ENCODE measurements at regions of chr9 and their contacts with region 1.

Region 1: DNA sequence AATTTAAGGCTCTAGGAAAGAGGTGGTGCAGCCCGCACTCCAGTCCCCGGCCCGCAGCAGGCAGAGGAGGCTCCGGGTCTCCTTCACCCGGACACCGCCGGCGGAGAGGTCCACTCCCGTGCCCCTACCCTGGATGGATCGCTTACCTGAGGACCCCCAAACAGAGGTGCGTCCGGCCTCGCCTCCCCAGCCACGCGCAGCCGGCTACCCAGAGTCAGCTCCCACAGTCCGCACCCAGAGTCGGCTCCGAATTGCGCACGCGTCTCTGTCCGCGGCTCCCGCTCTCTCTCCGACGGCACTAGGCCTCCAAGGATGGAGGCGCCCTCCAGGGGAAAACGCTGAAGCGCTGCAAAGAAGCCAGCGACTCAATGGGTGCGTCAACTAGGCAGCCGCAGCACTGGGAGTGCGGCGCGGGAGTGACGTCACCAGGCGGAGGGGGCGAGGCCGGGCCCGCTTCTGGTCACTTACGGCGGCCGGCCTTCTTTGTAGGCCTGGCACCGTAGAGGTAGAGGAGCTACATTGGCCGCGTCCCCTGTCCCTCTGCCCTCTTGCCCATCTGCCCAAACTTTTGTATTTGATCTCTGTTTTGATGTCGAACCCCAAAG is at the start of gene ELP1:
- DNase-seq: peak; percentile 88 to 93 (median 91)
- ATAC-seq: peak; percentile 91
- H3K4me3 ChIP-seq: peak within 1 kb of the TSS; percentile 90
- H3K4me3 Mint-ChIP-seq: peak within 1 kb of the TSS; percentile 88 to 100 (median 99)
- H3K27ac ChIP-seq: peak within 1 kb of the TSS; percentile 92
- H3K27ac Mint-ChIP-seq: peak within 1 kb of the TSS; percentile 96 to 99 (median 98)
- H3K4me1 ChIP-seq: peaks cover 15 to 18% of the 10 kb centered on the region in 2 donors
- H3K4me1 Mint-ChIP-seq: peaks cover 23 to 54% (median 38%) of the 10 kb centered on the region in 7 donors
- H3K27me3 ChIP-seq: no peaks in the 10 kb centered on the region
- H3K27me3 Mint-ChIP-seq: no peaks in the 10 kb centered on the region
- total RNA-seq, gene ELP1: 21.7 to 41.4 (median 26.5) TPM

Region 2: DNA sequence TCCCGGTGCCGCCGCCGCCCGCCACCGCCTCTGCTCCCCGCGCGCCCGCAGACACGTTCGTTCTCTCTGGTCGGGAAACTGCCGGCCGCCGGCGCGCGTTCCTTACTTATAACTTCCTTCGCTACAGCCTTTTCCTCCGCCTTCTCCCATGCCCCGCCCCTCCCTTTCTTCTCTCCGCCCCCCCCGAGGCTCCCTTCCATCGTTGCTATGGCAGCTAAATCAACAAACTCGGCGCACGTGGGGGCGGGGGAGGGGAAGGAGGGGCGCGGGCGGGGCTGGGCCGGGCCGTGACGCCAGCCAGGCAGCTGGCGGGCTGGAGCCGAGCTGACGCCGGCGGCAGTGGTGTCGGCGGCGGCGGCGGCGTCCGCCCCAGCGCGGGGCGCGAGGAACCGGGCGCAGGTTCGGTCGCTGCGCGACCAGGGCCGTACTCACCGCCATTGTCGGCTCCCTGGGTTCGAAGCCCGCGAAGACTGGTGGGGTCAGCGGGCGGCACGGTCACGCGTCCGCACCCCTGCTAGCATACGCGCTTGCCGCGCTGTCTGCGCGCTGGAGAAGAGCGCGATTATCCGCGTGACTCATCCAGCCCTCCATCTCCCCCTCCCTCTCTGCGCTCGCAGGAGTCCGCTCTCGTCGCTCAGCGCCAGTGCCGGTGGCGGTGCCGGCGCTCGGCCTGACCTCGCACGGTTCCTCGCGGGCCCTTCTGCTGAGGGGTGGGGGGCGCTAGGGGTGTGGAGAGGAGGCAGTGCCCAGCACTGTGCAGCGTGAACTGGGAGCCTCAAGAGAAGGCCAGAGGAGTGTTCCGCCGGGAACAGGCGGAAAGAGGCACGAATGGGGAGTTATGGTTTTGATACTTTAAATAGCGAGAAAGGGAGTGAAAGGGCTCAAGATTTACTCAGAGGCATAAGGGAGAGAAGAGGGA is 1443.9 kb before region 1 on chr9 and contains the start of gene KLF4:
- CTCF ChIA-PET with region 1: no interaction called
- POLR2A ChIA-PET with region 1: no interaction called
- intact Hi-C with region 1: loop called in 1 of 2 experiments (anchors 5 kb)
- DNase-seq: peak in 7 of 9 donors; percentile 7 to 72 (median 23)
- ATAC-seq: peak; percentile 77
- H3K4me3 ChIP-seq: no peak within 1 kb of the TSS
- H3K4me3 Mint-ChIP-seq: peak within 1 kb of the TSS; percentile 59 to 85 (median 73)
- H3K27ac ChIP-seq: no peak within 1 kb of the TSS
- H3K27ac Mint-ChIP-seq: peak within 1 kb of the TSS in 1 of 9 donors; percentile 80
- H3K4me1 ChIP-seq: peaks cover 0 to 5% of the 10 kb centered on the region in 2 donors
- H3K4me1 Mint-ChIP-seq: peaks cover 5 to 28% (median 15%) of the 10 kb centered on the region in 7 donors
- H3K27me3 ChIP-seq: peaks cover 0 to 3% of the 10 kb centered on the region in 2 donors
- H3K27me3 Mint-ChIP-seq: peaks cover 56 to 71% (median 60%) of the 10 kb centered on the region in 5 donors
- total RNA-seq, gene KLF4: 0.29 to 266 (median 1.0) TPM

Region 3: GRCh38 chr9:108776920-108777645 is 156.7 kb before region 1 on chr9:
- CTCF ChIA-PET with region 1: no interaction called
- POLR2A ChIA-PET with region 1: no interaction called
- intact Hi-C with region 1: no loop called
- DNase-seq: no peak
- ATAC-seq: no peak
- H3K4me3 ChIP-seq: no peak overlapping the region
- H3K4me3 Mint-ChIP-seq: no peak overlapping the region
- H3K27ac ChIP-seq: no peak overlapping the region
- H3K27ac Mint-ChIP-seq: peak overlapping the region in 1 of 9 donors; percentile 60
- H3K4me1 ChIP-seq: no peaks in the 10 kb centered on the region
- H3K4me1 Mint-ChIP-seq: peaks cover 0 to 4% (median 0%) of the 10 kb centered on the region in 7 donors
- H3K27me3 ChIP-seq: no peaks in the 10 kb centered on the region
- H3K27me3 Mint-ChIP-seq: peaks cover 5 to 43% (median 28%) of the 10 kb centered on the region in 5 donors

Region 4: GRCh38 chr9:109098171-109098959 is 164.5 kb after region 1 on chr9:
- CTCF ChIA-PET with region 1: no interaction called
- POLR2A ChIA-PET with region 1: no interaction called
- intact Hi-C with region 1: loop called (anchors 5 kb)
- DNase-seq: no peak
- ATAC-seq: no peak
- H3K4me3 ChIP-seq: no peak overlapping the region
- H3K4me3 Mint-ChIP-seq: peak overlapping the region; percentile 22 to 69 (median 63)
- H3K27ac ChIP-seq: no peak overlapping the region
- H3K27ac Mint-ChIP-seq: peak overlapping the region; percentile 65 to 90 (median 74)
- H3K4me1 ChIP-seq: peaks cover 20 to 79% of the 10 kb centered on the region in 2 donors
- H3K4me1 Mint-ChIP-seq: peaks cover 57 to 97% (median 95%) of the 10 kb centered on the region in 7 donors
- H3K27me3 ChIP-seq: no peaks in the 10 kb centered on the region
- H3K27me3 Mint-ChIP-seq: no peaks in the 10 kb centered on the region

Region 5: DNA sequence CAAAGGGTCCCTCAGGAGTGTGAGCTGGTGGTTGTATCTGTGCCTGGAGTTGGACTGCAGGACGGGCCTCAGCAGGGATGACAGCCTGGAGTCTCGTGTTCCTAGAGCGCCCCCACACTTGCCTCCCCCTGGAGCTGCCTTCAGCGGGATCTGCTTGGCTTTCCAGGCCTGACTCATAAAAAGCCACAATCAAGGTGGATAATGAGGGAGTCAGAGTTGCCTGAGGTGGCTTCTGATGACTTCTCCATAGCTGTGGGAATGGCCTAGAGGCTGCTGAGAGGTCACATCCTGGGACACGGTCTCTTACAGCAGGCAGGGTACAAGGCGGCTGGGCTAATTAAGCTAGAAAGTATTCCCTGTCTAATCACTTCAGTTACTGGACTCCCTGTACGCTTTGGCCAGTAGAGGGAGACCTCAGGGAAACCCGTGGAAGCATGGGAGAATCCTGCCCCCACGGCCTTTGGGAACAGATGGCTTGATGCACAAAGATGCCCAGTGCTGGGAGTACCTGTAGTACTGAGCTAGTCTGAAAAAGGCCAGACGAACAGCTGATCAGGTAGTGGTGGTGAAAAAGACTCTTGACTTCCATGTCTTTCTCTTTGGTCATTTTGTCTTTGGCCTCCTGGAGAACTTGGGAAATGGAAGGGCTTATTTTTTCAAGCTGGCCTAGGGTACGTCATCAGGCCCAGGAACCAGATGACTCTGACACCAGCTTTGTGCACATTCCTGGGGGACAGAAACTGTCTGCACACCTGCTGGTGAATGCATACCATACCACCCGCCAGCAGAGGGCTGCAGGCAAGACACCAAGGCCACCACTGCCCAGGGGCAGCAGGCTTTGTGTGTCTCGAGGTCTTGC is 249.3 kb after region 1 on chr9:
- CTCF ChIA-PET with region 1: no interaction called
- POLR2A ChIA-PET with region 1: no interaction called
- intact Hi-C with region 1: loop called in 1 of 2 experiments (anchors 1 kb)
- DNase-seq: no peak
- ATAC-seq: no peak
- H3K4me3 ChIP-seq: no peak overlapping the region
- H3K4me3 Mint-ChIP-seq: no peak overlapping the region
- H3K27ac ChIP-seq: no peak overlapping the region
- H3K27ac Mint-ChIP-seq: peak overlapping the region in 1 of 9 donors; percentile 48
- H3K4me1 ChIP-seq: no peaks in the 10 kb centered on the region
- H3K4me1 Mint-ChIP-seq: peaks cover 0 to 25% (median 20%) of the 10 kb centered on the region in 7 donors
- H3K27me3 ChIP-seq: no peaks in the 10 kb centered on the region
- H3K27me3 Mint-ChIP-seq: peaks cover 0 to 25% (median 0%) of the 10 kb centered on the region in 5 donors

Region 6: DNA sequence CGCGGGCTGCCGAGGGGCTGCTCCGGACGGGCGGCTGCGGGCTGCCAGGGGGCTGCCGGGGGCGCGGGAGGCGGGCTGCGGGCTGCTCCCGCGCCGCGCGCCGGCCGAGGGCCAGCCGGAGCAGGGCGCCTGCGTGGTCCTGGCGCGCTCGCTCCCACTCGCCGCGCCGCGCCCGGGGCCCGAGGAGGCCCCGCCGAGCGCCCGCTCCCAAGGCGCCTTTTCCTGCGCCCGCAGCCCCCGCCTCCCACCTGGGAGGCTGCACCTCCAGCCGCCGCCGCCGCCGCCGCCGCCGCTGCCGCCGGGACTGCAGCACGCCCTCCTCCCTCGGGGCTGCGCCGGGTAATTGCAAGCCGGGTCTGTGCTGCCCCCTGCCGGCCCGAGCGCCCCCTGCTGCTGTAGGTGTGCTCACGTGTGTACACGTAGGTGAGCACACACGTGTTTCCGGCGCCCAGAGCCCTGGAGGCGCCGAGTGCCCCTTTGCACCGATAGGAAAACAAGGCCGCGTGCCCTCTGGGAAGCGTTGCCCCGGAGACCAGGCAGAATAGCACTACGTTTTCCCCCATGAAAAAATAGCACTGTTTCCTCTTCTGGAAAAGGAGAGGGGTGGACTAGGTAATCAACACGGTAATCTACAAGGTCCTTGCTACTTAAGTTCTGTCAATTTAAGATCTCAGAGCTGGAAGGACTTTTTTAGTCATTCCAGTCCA is 387.1 kb after region 1 on chr9 and contains the start of gene EPB41L4B:
- CTCF ChIA-PET with region 1: no interaction called
- POLR2A ChIA-PET with region 1: no interaction called
- intact Hi-C with region 1: loop called (anchors 1 to 5 kb)
- DNase-seq: peak; percentile 63 to 94 (median 81)
- ATAC-seq: peak; percentile 97
- H3K4me3 ChIP-seq: no peak within 1 kb of the TSS
- H3K4me3 Mint-ChIP-seq: peak within 1 kb of the TSS; percentile 68 to 93 (median 83)
- H3K27ac ChIP-seq: no peak within 1 kb of the TSS
- H3K27ac Mint-ChIP-seq: no peak within 1 kb of the TSS
- H3K4me1 ChIP-seq: peaks cover 0 to 10% of the 10 kb centered on the region in 2 donors
- H3K4me1 Mint-ChIP-seq: peaks cover 5 to 12% (median 10%) of the 10 kb centered on the region in 7 donors
- H3K27me3 ChIP-seq: peaks cover 3 to 4% of the 10 kb centered on the region in 2 donors
- H3K27me3 Mint-ChIP-seq: peaks cover 58 to 77% (median 67%) of the 10 kb centered on the region in 5 donors
- total RNA-seq, gene EPB41L4B: 0.36 TPM in 1 of 5 experiments, not detected in the others

Region 7: GRCh38 chr9:109426626-109427402 is 493.0 kb after region 1 on chr9:
- CTCF ChIA-PET with region 1: no interaction called
- POLR2A ChIA-PET with region 1: no interaction called
- intact Hi-C with region 1: no loop called
- DNase-seq: no peak
- ATAC-seq: no peak
- H3K4me3 ChIP-seq: no peak overlapping the region
- H3K4me3 Mint-ChIP-seq: no peak overlapping the region
- H3K27ac ChIP-seq: no peak overlapping the region
- H3K27ac Mint-ChIP-seq: no peak overlapping the region
- H3K4me1 ChIP-seq: no peaks in the 10 kb centered on the region
- H3K4me1 Mint-ChIP-seq: no peaks in the 10 kb centered on the region
- H3K27me3 ChIP-seq: no peaks in the 10 kb centered on the region
- H3K27me3 Mint-ChIP-seq: peaks cover 0 to 16% (median 0%) of the 10 kb centered on the region in 5 donors

Region 8: DNA sequence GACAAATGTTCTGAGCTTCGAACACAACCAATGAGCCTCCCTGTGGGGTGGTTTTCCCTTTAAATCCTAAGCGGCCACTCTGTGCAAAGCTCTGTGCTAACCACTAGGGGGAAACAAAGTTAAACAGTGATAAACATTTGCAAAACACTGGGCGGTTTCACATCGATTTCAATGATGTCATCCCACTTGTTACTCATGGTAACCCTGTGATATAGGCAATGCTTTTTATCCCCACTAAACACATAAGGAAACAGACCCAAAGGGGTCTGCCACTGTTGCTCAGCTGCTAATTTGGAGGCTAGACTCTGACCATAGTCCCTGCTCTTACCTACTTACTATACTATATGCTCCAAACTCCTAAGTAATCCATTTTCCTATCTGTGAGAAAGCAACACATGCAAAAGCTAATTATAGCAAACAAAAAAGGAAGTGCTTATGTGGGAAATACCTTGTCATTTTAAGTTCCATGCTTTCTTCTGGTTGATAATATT is 507.0 kb after region 1 on chr9:
- CTCF ChIA-PET with region 1: no interaction called
- POLR2A ChIA-PET with region 1: no interaction called
- intact Hi-C with region 1: loop called in 1 of 2 experiments (anchors 2 kb)
- DNase-seq: peak in 8 of 9 donors; percentile 8 to 60 (median 42)
- ATAC-seq: peak; percentile 79
- H3K4me3 ChIP-seq: no peak overlapping the region
- H3K4me3 Mint-ChIP-seq: peak overlapping the region in 6 of 10 donors; percentile 5 to 56 (median 22)
- H3K27ac ChIP-seq: no peak overlapping the region
- H3K27ac Mint-ChIP-seq: peak overlapping the region in 1 of 9 donors; percentile 87
- H3K4me1 ChIP-seq: peaks cover 0 to 4% of the 10 kb centered on the region in 2 donors
- H3K4me1 Mint-ChIP-seq: peaks cover 7 to 21% (median 15%) of the 10 kb centered on the region in 7 donors
- H3K27me3 ChIP-seq: no peaks in the 10 kb centered on the region
- H3K27me3 Mint-ChIP-seq: peaks cover 5 to 30% (median 16%) of the 10 kb centered on the region in 5 donors

Measured in naive thymus-derived CD4-positive, alpha-beta T cell (primary cell).